SK-N-SH (cell line): ENCODE measurements at regions of chr7 and their contacts with region 1.

Region 1: GRCh38 chr7:42876182-42877068 is 35.4 kb downstream of the C7orf25 start:
- DNase-seq: peak; percentile 73
- H3K4me3 ChIP-seq: no peak overlapping the region
- H3K27ac ChIP-seq: no peak overlapping the region
- H3K4me1 ChIP-seq: no peaks in the 10 kb centered on the region
- H3K27me3 ChIP-seq: peaks cover 9% of the 10 kb centered on the region; the same call in 1 of the 2 replicates
- CTCF ChIP-seq: peak; percentile 94
- EP300 ChIP-seq: no peak
- RAD21 ChIP-seq: peak; percentile 64

Region 2: DNA sequence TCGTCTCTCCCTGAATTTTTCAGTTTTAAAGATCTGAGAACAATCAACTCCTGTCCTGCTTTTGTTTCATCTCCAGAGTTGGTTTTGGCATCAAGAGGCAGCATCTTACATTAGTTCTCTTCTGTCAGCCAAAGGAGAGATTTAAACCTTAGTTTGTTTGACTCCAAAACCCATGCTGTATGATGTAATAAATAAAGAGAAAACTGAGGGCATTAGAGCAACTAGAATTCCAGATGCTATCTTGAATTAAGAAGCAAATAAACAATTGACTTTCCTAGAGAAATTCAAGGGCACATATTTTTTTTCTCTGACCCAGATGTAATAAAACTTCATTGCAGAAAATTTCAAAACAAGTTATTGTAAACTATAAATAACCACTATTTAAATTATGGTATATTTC is 1227.9 kb before region 1 on chr7:
- CTCF ChIA-PET with region 1: no interaction called
- POLR2A ChIA-PET with region 1: no interaction called
- DNase-seq: no peak
- H3K4me3 ChIP-seq: no peak overlapping the region
- H3K27ac ChIP-seq: no peak overlapping the region
- H3K4me1 ChIP-seq: no peaks in the 10 kb centered on the region; a peak in 1 of 4 replicates
- H3K27me3 ChIP-seq: no peaks in the 10 kb centered on the region
- CTCF ChIP-seq: no peak
- EP300 ChIP-seq: no peak
- RAD21 ChIP-seq: no peak

Region 3: GRCh38 chr7:42852531-42852930 is 23.9 kb before region 1 on chr7:
- CTCF ChIA-PET with region 1: interaction called, 15 read pairs
- POLR2A ChIA-PET with region 1: no interaction called
- DNase-seq: no peak
- H3K4me3 ChIP-seq: no peak overlapping the region
- H3K27ac ChIP-seq: no peak overlapping the region
- H3K4me1 ChIP-seq: peaks cover 0 to 4% of the 10 kb centered on the region in 2 experiments; a peak in 1 of 4 replicates
- H3K27me3 ChIP-seq: peaks cover 46% of the 10 kb centered on the region
- CTCF ChIP-seq: no peak
- EP300 ChIP-seq: no peak
- RAD21 ChIP-seq: no peak

Region 4: DNA sequence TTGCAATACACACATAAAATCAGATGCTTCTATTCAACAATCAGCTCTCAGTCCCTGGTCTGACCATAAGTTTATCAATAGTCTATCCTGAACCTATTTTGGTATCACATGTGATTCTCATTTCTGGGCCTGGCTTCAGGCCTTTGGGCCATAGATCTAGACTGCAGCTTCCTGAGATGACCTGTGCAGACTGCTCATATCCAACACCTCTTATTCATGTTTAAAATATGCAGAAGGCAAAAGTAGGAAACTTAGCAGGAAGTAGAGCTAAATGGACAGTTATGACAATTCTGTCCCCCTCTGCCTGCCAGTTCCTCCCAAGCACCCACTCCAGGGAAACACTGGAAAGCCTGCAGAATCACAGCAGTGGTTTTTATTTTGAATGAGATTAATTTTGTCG is 17.9 kb before region 1 on chr7:
- CTCF ChIA-PET with region 1: interaction called, 13 read pairs
- POLR2A ChIA-PET with region 1: no interaction called
- DNase-seq: no peak
- H3K4me3 ChIP-seq: no peak overlapping the region
- H3K27ac ChIP-seq: no peak overlapping the region
- H3K4me1 ChIP-seq: peaks cover 4 to 8% of the 10 kb centered on the region in 2 experiments; a peak in 2 of 4 replicates
- H3K27me3 ChIP-seq: peaks cover 26% of the 10 kb centered on the region
- CTCF ChIP-seq: no peak
- EP300 ChIP-seq: no peak
- RAD21 ChIP-seq: no peak

Region 5: GRCh38 chr7:42907316-42907715 is 30.9 kb after region 1 on chr7:
- CTCF ChIA-PET with region 1: interaction called, 12 read pairs
- POLR2A ChIA-PET with region 1: no interaction called
- DNase-seq: no peak
- H3K4me3 ChIP-seq: no peak overlapping the region
- H3K27ac ChIP-seq: no peak overlapping the region
- H3K4me1 ChIP-seq: peaks cover 0 to 12% of the 10 kb centered on the region in 2 experiments; a peak in 2 of 4 replicates
- H3K27me3 ChIP-seq: no peaks in the 10 kb centered on the region
- CTCF ChIP-seq: no peak
- EP300 ChIP-seq: no peak
- RAD21 ChIP-seq: no peak